T-cell (primary cell): ENCODE measurements at regions of chr10 and their contacts with region 1.

Region 1: DNA sequence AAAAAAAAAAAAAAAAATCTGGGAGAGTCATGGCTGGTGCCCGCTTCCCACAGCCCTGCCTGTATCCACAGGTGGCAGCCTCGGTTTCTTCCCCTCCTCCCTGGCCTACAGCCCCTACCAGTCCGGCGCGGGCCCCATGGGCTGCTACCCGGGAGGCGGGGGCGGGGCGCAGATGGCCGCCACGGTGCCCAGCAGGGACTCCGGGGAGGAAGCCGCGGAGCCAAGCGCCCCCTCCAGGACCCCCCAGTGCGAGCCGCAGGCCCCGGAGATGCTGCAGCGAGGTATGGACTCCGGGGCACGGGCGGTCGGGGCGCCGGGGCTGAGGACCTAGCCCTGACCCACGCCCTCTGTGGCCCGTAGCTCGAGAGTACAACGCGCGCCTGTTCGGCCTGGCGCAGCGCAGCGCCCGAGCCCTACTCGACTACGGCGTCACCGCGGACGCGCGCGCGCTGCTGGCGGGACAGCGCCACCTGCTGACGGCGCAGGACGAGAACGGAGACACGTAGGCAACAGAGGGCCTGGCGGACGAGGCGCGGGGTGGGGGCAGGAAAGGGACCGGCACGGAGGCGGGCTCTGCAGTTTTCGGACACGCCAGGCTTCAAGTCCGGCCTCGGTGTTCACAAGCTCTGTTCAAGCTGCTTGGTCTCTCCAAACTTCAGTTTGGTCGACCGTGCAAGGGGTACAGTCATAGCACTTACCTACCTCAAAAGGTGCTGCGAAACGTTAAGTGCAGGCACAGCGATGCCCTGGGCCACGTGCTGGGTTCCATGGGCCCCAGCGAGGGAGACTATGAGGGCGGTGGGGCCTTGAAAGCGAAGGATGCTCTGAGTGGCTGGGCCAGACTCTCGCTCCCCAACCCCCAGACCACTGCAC is 3.9 kb downstream of the NFKB2 start:
- DNase-seq: peak; percentile 71 to 96 (median 84)
- ATAC-seq: peak; percentile 43 to 70 (median 66)
- H3K4me3 ChIP-seq: peak overlapping the region; percentile 27 to 42
- H3K4me3 Mint-ChIP-seq: peak overlapping the region; percentile 58 to 96 (median 68)
- H3K27ac ChIP-seq: peak overlapping the region; percentile 70
- H3K27ac Mint-ChIP-seq: peak overlapping the region; percentile 61 to 80
- H3K4me1 ChIP-seq: peaks cover 12 to 61% of the 10 kb centered on the region in 2 experiments
- H3K4me1 Mint-ChIP-seq: peaks cover 38 to 42% (median 41%) of the 10 kb centered on the region in 3 donors
- H3K27me3 ChIP-seq: no peaks in the 10 kb centered on the region
- H3K27me3 Mint-ChIP-seq: no peaks in the 10 kb centered on the region

Region 2: GRCh38 chr10:102225646-102226541 is 173.6 kb before region 1 on chr10 and contains the start of gene ELOVL3:
- CTCF ChIA-PET with region 1: interaction called in 1 of 2 experiments, 15 read pairs
- POLR2A ChIA-PET with region 1: no interaction called
- DNase-seq: peak; percentile 62 to 91 (median 80)
- ATAC-seq: peak; percentile 88 to 94 (median 92)
- H3K4me3 ChIP-seq: peak within 1 kb of the TSS; percentile 17 to 39
- H3K4me3 Mint-ChIP-seq: peak within 1 kb of the TSS; percentile 71 to 75 (median 71)
- H3K27ac ChIP-seq: no peak within 1 kb of the TSS
- H3K27ac Mint-ChIP-seq: peak within 1 kb of the TSS in 1 of 2 donors; percentile 17
- H3K4me1 ChIP-seq: peaks cover 2 to 27% of the 10 kb centered on the region in 2 experiments
- H3K4me1 Mint-ChIP-seq: peaks cover 18 to 25% (median 24%) of the 10 kb centered on the region in 3 donors
- H3K27me3 ChIP-seq: peaks cover 2 to 61% of the 10 kb centered on the region in 2 experiments
- H3K27me3 Mint-ChIP-seq: peaks cover 28 to 49% of the 10 kb centered on the region in 2 donors
- total RNA-seq, gene ELOVL3: not detected

Region 3: DNA sequence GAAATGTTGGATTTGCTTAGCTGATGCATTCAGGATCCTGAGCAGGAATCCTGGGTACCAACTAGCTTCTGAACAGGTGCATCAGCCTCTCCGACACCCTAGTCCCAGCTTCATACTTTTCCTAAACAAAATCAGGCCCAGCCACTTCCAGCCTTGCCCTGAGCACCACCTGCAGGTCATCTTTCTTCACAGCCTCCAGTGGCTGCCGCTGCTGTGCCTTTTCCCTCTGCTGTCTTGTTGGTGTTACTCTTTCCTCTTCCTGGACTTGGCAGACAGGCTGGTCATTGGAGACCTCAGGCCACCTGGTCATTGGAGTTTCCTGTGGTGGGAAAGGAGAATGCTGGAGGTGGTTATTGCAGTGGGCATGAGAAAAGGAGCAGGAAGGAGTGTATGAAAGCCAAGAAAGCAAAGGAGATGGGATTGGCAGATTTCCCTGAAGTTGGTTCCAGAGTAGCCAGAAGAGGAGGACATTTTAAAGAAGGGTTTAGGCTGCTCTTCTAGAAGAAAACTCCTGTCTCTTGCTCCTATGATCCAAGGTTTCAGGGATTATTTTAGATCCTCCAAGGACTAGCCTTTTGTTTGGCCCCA is 52.1 kb before region 1 on chr10:
- CTCF ChIA-PET with region 1: no interaction called
- POLR2A ChIA-PET with region 1: no interaction called
- DNase-seq: peak in 1 of 35 experiments; percentile 15
- ATAC-seq: no peak
- H3K4me3 ChIP-seq: no peak overlapping the region
- H3K4me3 Mint-ChIP-seq: no peak overlapping the region
- H3K27ac ChIP-seq: no peak overlapping the region
- H3K27ac Mint-ChIP-seq: peak overlapping the region; percentile 36 to 52
- H3K4me1 ChIP-seq: no peaks in the 10 kb centered on the region
- H3K4me1 Mint-ChIP-seq: no peaks in the 10 kb centered on the region
- H3K27me3 ChIP-seq: no peaks in the 10 kb centered on the region
- H3K27me3 Mint-ChIP-seq: no peaks in the 10 kb centered on the region